Prostate gland (tissue), 2 donors: ENCODE measurements at regions of chr12 and their contacts with region 1.

Region 1: GRCh38 chr12:53213348-53213747 is 6.3 kb upstream of the ITGB7 start:
- DNase-seq: peak; percentile 78
- H3K4me3 ChIP-seq: no peak overlapping the region
- H3K27ac ChIP-seq: no peak overlapping the region
- H3K4me1 ChIP-seq: peaks cover 16% of the 10 kb centered on the region
- H3K27me3 ChIP-seq: no peaks in the 10 kb centered on the region
- CTCF ChIP-seq: peak; percentile 83 to 98 (median 96)
- POLR2A ChIP-seq: no peak

Region 2: GRCh38 chr12:53287741-53288216 is 74.4 kb after region 1 on chr12:
- intact Hi-C with region 1: loop called (anchors 2 kb)
- DNase-seq: peak; percentile 66
- H3K4me3 ChIP-seq: no peak overlapping the region
- H3K27ac ChIP-seq: peak overlapping the region; percentile 20 to 48
- H3K4me1 ChIP-seq: peaks cover 8% of the 10 kb centered on the region
- H3K27me3 ChIP-seq: no peaks in the 10 kb centered on the region
- CTCF ChIP-seq: peak; percentile 53 to 85 (median 80)
- POLR2A ChIP-seq: no peak